Prostate gland (tissue), 2 donors: ENCODE measurements at regions of chr3 and their contacts with region 1.

Region 1: DNA sequence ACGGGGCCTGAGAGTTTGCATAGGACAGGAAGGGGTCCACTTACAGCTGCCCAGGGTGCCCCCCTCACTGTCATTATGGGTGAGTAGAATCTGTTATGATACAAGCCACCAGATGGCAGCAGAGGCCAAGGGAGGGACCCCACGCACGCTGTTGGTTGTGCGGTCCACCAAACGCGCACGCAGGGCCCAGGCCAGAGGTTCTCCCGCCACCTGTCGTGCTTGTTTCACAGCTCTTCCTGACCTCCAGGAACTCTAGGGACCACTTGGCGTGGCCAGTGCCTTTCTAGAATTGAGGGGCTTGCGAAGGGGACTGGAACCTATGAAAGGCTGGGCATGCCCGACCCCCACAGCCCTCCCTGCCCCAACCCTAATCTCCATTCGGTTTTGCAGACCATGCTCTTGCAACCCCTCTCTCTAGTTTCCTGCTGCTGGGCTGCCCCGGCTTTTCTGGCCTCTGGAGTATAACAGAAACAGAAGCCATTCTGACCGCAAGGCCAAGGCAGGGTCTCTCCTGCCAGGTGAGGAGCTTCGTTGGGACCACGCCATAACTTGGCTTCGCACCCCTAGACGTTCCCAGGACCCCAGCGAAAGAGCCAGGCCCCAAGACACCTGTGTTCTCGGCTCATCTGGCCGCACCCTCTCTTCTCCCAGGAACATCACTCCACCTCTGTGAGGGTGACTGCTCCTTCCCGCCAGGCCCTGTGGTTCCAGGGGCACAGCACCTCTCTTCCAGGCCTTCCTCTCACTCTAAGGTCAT is 46.0 kb downstream of the ALDH1L1 start:
- DNase-seq: peak; percentile 49
- H3K4me3 ChIP-seq: no peak overlapping the region
- H3K27ac ChIP-seq: no peak overlapping the region
- H3K4me1 ChIP-seq: no peaks in the 10 kb centered on the region
- H3K27me3 ChIP-seq: no peaks in the 10 kb centered on the region
- CTCF ChIP-seq: peak; percentile 57 to 90 (median 81)
- POLR2A ChIP-seq: no peak

Region 2: DNA sequence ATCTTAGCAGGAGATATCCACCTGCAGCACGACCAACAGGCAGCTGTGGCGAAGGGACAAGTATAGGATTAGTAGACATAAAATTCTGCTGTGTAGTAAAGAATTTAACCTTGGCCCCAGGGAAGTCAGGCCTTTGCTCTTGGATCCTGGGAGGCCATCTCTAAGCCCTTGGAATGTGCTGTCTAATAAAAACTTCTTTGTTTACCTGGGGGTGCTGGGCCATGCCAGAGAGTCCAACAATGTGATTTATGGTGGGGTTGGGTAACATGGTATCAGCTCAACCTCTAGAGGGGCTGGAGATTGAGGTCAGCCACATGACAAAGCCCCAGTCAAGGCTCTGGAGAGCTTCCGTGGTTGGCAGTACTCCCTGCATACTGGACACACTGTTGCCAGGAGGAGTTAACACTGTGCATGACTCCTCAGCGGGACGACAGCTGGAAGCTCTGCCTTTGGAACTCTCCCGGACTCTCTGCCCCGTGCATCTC is 1131.0 kb before region 1 on chr3:
- intact Hi-C with region 1: no loop called
- DNase-seq: peak; percentile 31
- H3K4me3 ChIP-seq: no peak overlapping the region
- H3K27ac ChIP-seq: peak overlapping the region in 1 of 2 donors; percentile 4
- H3K4me1 ChIP-seq: peaks cover 14% of the 10 kb centered on the region
- H3K27me3 ChIP-seq: no peaks in the 10 kb centered on the region
- CTCF ChIP-seq: no peak
- POLR2A ChIP-seq: no peak

Region 3: DNA sequence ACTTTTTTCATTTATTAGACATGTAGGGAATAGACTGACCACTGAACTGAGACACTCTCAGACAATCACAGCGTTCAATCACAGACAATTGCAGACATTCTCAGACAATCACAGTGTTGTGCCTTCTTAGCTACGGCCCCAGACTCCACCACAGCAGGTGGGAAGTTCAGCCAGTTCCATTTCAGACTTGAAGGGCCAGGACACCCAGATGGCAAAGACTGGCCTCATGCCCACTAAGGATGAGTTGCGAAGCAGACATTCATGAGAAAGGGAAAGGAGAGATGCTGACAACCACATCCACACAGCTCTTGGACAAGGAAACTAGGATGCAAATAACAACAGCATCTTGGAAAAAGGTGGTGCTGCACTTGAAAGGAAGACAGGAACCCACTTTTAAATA is 67.9 kb after region 1 on chr3:
- intact Hi-C with region 1: loop called (anchors 5 kb)
- DNase-seq: no peak
- H3K4me3 ChIP-seq: no peak overlapping the region
- H3K27ac ChIP-seq: no peak overlapping the region
- H3K4me1 ChIP-seq: no peaks in the 10 kb centered on the region
- H3K27me3 ChIP-seq: no peaks in the 10 kb centered on the region
- CTCF ChIP-seq: no peak
- POLR2A ChIP-seq: no peak

Region 4: GRCh38 chr3:126259411-126260391 is 125.3 kb after region 1 on chr3:
- intact Hi-C with region 1: loop called (anchors 10 kb)
- DNase-seq: no peak
- H3K4me3 ChIP-seq: no peak overlapping the region
- H3K27ac ChIP-seq: no peak overlapping the region
- H3K4me1 ChIP-seq: no peaks in the 10 kb centered on the region
- H3K27me3 ChIP-seq: no peaks in the 10 kb centered on the region
- CTCF ChIP-seq: peak; percentile 13 to 77 (median 63)
- POLR2A ChIP-seq: no peak

Region 5: GRCh38 chr3:126530171-126531050 is 396.0 kb after region 1 on chr3:
- intact Hi-C with region 1: no loop called
- DNase-seq: no peak
- H3K4me3 ChIP-seq: no peak overlapping the region
- H3K27ac ChIP-seq: no peak overlapping the region
- H3K4me1 ChIP-seq: peaks cover 4% of the 10 kb centered on the region
- H3K27me3 ChIP-seq: no peaks in the 10 kb centered on the region
- CTCF ChIP-seq: no peak
- POLR2A ChIP-seq: no peak